OCI-LY7 (cell line): ENCODE measurements at regions of chr20 and their contacts with region 1.

Region 1: GRCh38 chr20:48188657-48189551 is 403.6 kb upstream of the SULF2 start:
- DNase-seq: peak; percentile 46
- H3K4me3 ChIP-seq: no peak overlapping the region
- H3K27ac ChIP-seq: no peak overlapping the region
- H3K4me1 ChIP-seq: no peaks in the 10 kb centered on the region
- CTCF ChIP-seq: peak; percentile 76

Region 2: GRCh38 chr20:47677635-47678453 is 511.1 kb before region 1 on chr20:
- CTCF ChIA-PET with region 1: no interaction called
- POLR2A ChIA-PET with region 1: no interaction called
- intact Hi-C with region 1: loop called (anchors 5 kb)
- DNase-seq: peak; percentile 72
- H3K4me3 ChIP-seq: no peak overlapping the region
- H3K27ac ChIP-seq: no peak overlapping the region
- H3K4me1 ChIP-seq: no peaks in the 10 kb centered on the region
- CTCF ChIP-seq: peak; percentile 90

Region 3: DNA sequence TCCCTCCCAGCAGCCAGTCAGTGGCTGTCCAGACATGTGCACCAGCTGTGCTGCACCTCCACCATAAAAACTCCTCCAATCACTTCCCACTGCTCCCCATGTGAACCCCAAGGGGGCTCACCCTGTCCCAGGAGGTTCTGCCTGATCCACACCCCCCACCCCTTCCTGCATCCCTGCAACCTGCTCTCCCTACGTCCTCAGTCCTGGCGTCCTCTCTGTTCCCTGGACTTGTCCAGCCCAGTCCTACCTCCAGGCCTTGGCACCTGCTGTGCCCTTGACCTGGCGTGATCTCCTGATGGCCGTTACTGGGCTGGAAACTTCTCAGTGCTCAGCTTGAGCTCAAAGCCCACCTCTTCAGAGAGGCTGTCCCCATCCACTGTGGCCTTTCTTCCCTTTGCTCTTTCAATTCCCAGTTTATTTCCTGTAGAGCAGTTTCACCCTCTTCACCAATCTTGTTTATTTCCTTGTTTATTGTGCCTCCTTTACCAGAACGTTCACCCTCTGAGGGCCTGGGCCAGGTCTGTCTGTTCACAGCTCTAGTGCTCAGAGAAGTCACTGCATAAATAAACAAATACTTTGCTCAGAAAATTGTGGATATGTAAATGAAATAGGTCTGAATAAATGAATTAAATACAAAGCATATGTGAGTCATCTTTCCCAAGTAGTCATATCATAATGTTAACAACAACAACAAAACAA is 228.0 kb before region 1 on chr20:
- CTCF ChIA-PET with region 1: no interaction called
- POLR2A ChIA-PET with region 1: no interaction called
- intact Hi-C with region 1: loop called (anchors 10 kb)
- DNase-seq: no peak
- H3K4me3 ChIP-seq: no peak overlapping the region
- H3K27ac ChIP-seq: no peak overlapping the region
- H3K4me1 ChIP-seq: peaks cover 16% of the 10 kb centered on the region
- CTCF ChIP-seq: no peak